ENCODE measurements at regions of chr17 and their contacts with region 1.

Region 1: DNA sequence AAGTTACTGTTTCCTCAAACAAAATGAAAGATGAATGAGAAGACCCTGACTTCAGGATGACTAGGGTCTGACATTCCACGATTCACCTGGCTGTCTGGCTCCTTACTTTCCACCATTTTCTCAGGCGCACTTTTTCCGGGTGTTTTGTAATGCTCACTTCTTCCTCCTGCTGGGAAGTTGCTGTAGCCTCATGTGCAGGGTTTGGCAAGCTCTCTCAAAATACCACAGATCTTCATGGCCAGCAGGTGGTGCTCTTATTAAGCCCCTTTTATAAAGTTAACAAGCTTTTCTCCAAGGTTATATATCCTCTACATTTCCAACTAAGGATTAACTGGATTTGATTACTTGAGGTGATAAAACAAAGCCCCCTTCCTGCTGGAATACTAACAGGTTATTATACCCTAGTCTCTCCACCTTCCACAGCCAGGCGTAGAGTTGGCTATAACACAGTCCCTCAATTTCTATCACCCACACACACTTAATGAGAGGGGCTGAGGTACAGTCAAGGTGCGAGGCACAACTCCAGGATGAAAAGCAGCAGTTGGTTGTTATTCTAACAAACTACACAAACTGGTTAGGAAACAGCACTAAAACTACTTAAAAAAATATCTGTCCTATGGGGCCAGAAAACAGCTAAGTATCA is 45.4 kb downstream of the STH start:
- DNase-seq: peak; percentile 64 to 88 (median 74)
- H3K4me3 ChIP-seq: no peak overlapping the region
- H3K27ac ChIP-seq: peak overlapping the region in 1 of 2 donors; percentile 29
- H3K4me1 ChIP-seq: peaks cover 4% of the 10 kb centered on the region
- H3K27me3 ChIP-seq: no peaks in the 10 kb centered on the region
- CTCF ChIP-seq: peak; percentile 64 to 94 (median 94)
- EP300 ChIP-seq: no peak
- POLR2A ChIP-seq: no peak

Region 2: DNA sequence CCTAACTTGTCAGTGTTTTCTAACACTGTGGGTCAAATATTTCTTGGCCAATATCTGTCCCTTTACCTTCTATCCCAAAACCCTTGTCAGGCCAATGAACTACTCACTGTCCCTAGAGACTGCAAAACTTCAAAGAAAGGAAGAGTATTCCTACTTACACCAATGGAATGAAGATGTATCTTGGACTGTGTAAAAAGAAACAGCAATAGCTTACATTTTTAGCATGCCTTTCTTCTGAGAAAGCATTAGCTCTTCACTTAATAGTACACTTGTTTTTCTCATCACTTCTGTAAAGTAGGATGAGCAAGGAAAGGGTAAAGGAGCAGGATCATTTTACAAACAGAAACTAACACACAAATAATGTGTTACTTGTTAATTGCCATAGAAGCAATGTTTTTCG is 28.6 kb after region 1 on chr17:
- intact Hi-C with region 1: no loop called
- DNase-seq: no peak
- H3K4me3 ChIP-seq: no peak overlapping the region
- H3K27ac ChIP-seq: no peak overlapping the region
- H3K4me1 ChIP-seq: no peaks in the 10 kb centered on the region
- H3K27me3 ChIP-seq: no peaks in the 10 kb centered on the region
- CTCF ChIP-seq: no peak
- EP300 ChIP-seq: no peak
- POLR2A ChIP-seq: no peak

Region 3: GRCh38 chr17:46193626-46194392 is 149.4 kb after region 1 on chr17:
- intact Hi-C with region 1: loop called (anchors 2 to 10 kb)
- DNase-seq: peak; percentile 93 to 96 (median 95)
- H3K4me3 ChIP-seq: peak overlapping the region; percentile 88
- H3K27ac ChIP-seq: peak overlapping the region; percentile 84 to 98
- H3K4me1 ChIP-seq: peaks cover 15% of the 10 kb centered on the region
- H3K27me3 ChIP-seq: no peaks in the 10 kb centered on the region
- CTCF ChIP-seq: peak in 2 of 3 donors; percentile 54 to 77
- EP300 ChIP-seq: no peak
- POLR2A ChIP-seq: no peak